Mammary epithelial cell (primary cell): ENCODE measurements at regions of chr3 and their contacts with region 1.

Region 1: GRCh38 chr3:32106280-32106928 is at the start of gene GPD1L:
- DNase-seq: peak; percentile 94
- H3K4me3 ChIP-seq: peak within 1 kb of the TSS; percentile 53 to 90 (median 62)
- H3K27ac ChIP-seq: no peak within 1 kb of the TSS
- H3K4me1 ChIP-seq: peaks cover 16% of the 10 kb centered on the region
- H3K27me3 ChIP-seq: no peaks in the 10 kb centered on the region
- CTCF ChIP-seq: no peak
- total RNA-seq, gene GPD1L: 5.7 to 7.5 TPM

Region 2: DNA sequence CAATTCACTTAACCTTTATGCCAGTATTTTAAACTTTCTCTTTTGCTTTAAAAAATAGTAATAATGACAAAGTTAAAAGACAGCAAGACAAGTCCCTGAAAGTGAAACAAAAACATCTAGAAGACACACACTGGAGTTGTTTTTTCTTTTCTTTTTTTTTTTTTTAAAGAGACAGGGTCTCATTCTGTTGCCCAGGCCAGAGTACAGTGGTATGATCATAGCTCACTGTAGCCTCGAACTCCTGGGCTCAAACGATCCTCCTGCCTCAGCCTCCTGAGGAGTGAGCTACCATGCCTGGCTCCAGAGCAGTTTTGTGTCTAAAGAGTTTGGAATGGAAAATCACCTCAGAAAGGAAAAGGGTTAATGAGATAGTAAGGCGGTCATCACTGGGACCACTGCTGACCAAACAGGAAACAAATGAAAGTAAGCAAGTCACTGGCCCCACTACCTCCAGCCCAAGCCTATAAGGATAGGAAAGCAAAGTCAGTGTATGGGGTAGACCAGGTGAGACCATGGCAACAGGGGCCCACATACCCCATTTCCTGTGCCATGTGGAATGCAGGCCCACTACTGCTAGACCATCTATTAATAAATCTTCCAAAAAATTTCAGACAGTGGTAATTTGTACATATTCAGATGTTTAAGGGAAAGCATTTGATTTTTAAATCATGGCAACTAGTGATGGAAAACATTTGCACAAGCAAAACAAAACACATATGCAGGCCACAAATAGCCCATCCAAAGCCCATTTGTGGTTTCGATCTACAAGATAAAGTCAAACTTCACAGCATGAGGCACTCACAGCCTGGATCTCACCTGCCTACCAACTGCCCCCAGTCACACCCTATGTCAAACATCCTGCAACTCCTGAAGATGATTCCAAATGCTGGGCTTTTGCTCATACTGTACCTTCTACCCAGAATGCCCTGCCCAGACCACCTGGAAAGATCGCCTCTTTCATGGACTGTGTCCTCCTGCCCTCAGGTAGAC is 187.9 kb before region 1 on chr3:
- CTCF ChIA-PET with region 1: no interaction called
- dilution Hi-C with region 1: no loop called
- in situ Hi-C with region 1: no loop called
- intact Hi-C with region 1: no loop called
- DNase-seq: no peak
- H3K4me3 ChIP-seq: peak overlapping the region in 1 of 3 experiments; percentile 6
- H3K27ac ChIP-seq: no peak overlapping the region
- H3K4me1 ChIP-seq: peaks cover 15% of the 10 kb centered on the region
- H3K27me3 ChIP-seq: no peaks in the 10 kb centered on the region
- CTCF ChIP-seq: no peak

Region 3: GRCh38 chr3:31936420-31937060 is 169.9 kb before region 1 on chr3:
- CTCF ChIA-PET with region 1: no interaction called
- dilution Hi-C with region 1: loop called (anchors 5 kb)
- in situ Hi-C with region 1: no loop called
- intact Hi-C with region 1: no loop called
- DNase-seq: no peak
- H3K4me3 ChIP-seq: no peak overlapping the region
- H3K27ac ChIP-seq: peak overlapping the region; percentile 0
- H3K4me1 ChIP-seq: peaks cover 47% of the 10 kb centered on the region
- H3K27me3 ChIP-seq: no peaks in the 10 kb centered on the region
- CTCF ChIP-seq: no peak

Region 4: GRCh38 chr3:32082721-32083120 is 23.7 kb before region 1 on chr3:
- CTCF ChIA-PET with region 1: no interaction called
- dilution Hi-C with region 1: no loop called
- in situ Hi-C with region 1: no loop called
- intact Hi-C with region 1: no loop called
- DNase-seq: no peak
- H3K4me3 ChIP-seq: no peak overlapping the region
- H3K27ac ChIP-seq: no peak overlapping the region
- H3K4me1 ChIP-seq: no peaks in the 10 kb centered on the region
- H3K27me3 ChIP-seq: no peaks in the 10 kb centered on the region
- CTCF ChIP-seq: no peak